H1 (cell line): ENCODE measurements at regions of chr7 and their contacts with region 1.

Region 1: DNA sequence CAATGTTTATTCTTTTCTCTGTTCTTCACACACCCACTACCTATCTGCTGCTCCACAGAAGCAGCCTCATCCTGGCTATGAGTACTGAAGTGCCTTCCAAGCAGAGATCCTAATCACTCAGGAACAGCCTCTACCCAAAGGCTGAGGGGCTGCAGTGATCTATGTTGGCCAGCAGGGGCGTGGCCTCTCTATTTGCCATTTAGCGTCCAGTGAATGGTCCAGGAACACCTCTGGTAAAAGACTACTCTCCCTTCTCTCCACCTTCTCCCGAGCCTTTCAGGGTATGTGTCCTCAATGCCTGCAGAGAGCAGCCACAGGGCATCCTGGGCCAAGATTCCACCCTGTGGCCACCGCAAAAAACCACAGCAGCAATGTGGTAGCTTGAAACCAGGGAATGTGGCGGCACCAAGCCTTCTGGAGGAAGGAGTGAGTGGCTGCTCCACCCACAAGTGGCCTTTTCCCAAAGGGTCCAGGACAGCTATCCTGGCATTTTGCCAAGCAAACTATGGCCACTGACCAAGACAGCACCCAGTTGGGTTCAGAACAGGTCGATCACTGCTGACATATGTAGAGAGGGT is 70.9 kb downstream of the SYPL1 start:
- DNase-seq: peak in 1 of 2 experiments; percentile 80
- H3K4me3 ChIP-seq: no peak overlapping the region
- H3K27ac ChIP-seq: no peak overlapping the region
- H3K4me1 ChIP-seq: peaks cover 0 to 7% (median 0%) of the 10 kb centered on the region in 4 experiments; a peak in 3 of 7 replicates
- H3K27me3 ChIP-seq: no peaks in the 10 kb centered on the region
- CTCF ChIP-seq: peak; percentile 76 to 98 (median 89)
- EP300 ChIP-seq: no peak
- POLR2A ChIP-seq: no peak
- RAD21 ChIP-seq: peak; percentile 55 to 65

Region 2: GRCh38 chr7:105652359-105652993 is 388.8 kb before region 1 on chr7:
- CTCF ChIA-PET with region 1: interaction called, 20 read pairs
- POLR2A ChIA-PET with region 1: no interaction called
- DNase-seq: peak; percentile 69 to 92
- H3K4me3 ChIP-seq: no peak overlapping the region
- H3K27ac ChIP-seq: no peak overlapping the region; the same call in 1 of the 2 replicates
- H3K4me1 ChIP-seq: peaks cover 33 to 58% (median 36%) of the 10 kb centered on the region in 4 experiments
- H3K27me3 ChIP-seq: no peaks in the 10 kb centered on the region; a peak in 1 of 7 replicates
- CTCF ChIP-seq: peak; percentile 90 to 97 (median 96)
- EP300 ChIP-seq: no peak
- POLR2A ChIP-seq: no peak
- RAD21 ChIP-seq: peak; percentile 90 to 92

Region 3: GRCh38 chr7:105861224-105861623 is 180.0 kb before region 1 on chr7:
- CTCF ChIA-PET with region 1: interaction called, 11 read pairs
- POLR2A ChIA-PET with region 1: no interaction called
- DNase-seq: no peak
- H3K4me3 ChIP-seq: peak overlapping the region in 1 of 4 experiments; percentile 9; a peak in 2 of 8 replicates
- H3K27ac ChIP-seq: no peak overlapping the region
- H3K4me1 ChIP-seq: peaks cover 6 to 17% (median 10%) of the 10 kb centered on the region in 4 experiments; a peak in 5 of 7 replicates
- H3K27me3 ChIP-seq: no peaks in the 10 kb centered on the region
- CTCF ChIP-seq: no peak
- EP300 ChIP-seq: no peak
- POLR2A ChIP-seq: no peak
- RAD21 ChIP-seq: no peak

Region 4: GRCh38 chr7:105924945-105925344 is 116.3 kb before region 1 on chr7:
- CTCF ChIA-PET with region 1: interaction called, 14 read pairs
- POLR2A ChIA-PET with region 1: no interaction called
- DNase-seq: no peak
- H3K4me3 ChIP-seq: no peak overlapping the region
- H3K27ac ChIP-seq: no peak overlapping the region
- H3K4me1 ChIP-seq: no peaks in the 10 kb centered on the region
- H3K27me3 ChIP-seq: no peaks in the 10 kb centered on the region
- CTCF ChIP-seq: no peak
- EP300 ChIP-seq: no peak
- POLR2A ChIP-seq: no peak
- RAD21 ChIP-seq: no peak

Region 5: GRCh38 chr7:105990726-105991453 is 50.3 kb before region 1 on chr7:
- CTCF ChIA-PET with region 1: interaction called, 18 read pairs
- POLR2A ChIA-PET with region 1: interaction called, 3 read pairs
- DNase-seq: peak; percentile 68 to 72
- H3K4me3 ChIP-seq: no peak overlapping the region
- H3K27ac ChIP-seq: no peak overlapping the region; the same call in 1 of the 2 replicates
- H3K4me1 ChIP-seq: peaks cover 11 to 34% (median 28%) of the 10 kb centered on the region in 4 experiments; a peak in 6 of 7 replicates
- H3K27me3 ChIP-seq: no peaks in the 10 kb centered on the region
- CTCF ChIP-seq: peak; percentile 37 to 76 (median 73)
- EP300 ChIP-seq: 0 out of 3 replicates have a peak, but pooled peaks of 1 of the 2 experiments have one; percentile 16
- POLR2A ChIP-seq: no peak
- RAD21 ChIP-seq: peak; percentile 40 to 49

Region 6: GRCh38 chr7:106056513-106057203 is 15.4 kb after region 1 on chr7:
- CTCF ChIA-PET with region 1: interaction called, 58 read pairs
- POLR2A ChIA-PET with region 1: interaction called, 3 read pairs
- DNase-seq: peak in 1 of 2 experiments; percentile 71
- H3K4me3 ChIP-seq: no peak overlapping the region
- H3K27ac ChIP-seq: no peak overlapping the region
- H3K4me1 ChIP-seq: peaks cover 0 to 5% (median 2%) of the 10 kb centered on the region in 4 experiments; a peak in 3 of 7 replicates
- H3K27me3 ChIP-seq: no peaks in the 10 kb centered on the region
- CTCF ChIP-seq: peak; percentile 83 to 95 (median 91)
- EP300 ChIP-seq: no peak
- POLR2A ChIP-seq: no peak
- RAD21 ChIP-seq: peak; percentile 88 to 92

Region 7: DNA sequence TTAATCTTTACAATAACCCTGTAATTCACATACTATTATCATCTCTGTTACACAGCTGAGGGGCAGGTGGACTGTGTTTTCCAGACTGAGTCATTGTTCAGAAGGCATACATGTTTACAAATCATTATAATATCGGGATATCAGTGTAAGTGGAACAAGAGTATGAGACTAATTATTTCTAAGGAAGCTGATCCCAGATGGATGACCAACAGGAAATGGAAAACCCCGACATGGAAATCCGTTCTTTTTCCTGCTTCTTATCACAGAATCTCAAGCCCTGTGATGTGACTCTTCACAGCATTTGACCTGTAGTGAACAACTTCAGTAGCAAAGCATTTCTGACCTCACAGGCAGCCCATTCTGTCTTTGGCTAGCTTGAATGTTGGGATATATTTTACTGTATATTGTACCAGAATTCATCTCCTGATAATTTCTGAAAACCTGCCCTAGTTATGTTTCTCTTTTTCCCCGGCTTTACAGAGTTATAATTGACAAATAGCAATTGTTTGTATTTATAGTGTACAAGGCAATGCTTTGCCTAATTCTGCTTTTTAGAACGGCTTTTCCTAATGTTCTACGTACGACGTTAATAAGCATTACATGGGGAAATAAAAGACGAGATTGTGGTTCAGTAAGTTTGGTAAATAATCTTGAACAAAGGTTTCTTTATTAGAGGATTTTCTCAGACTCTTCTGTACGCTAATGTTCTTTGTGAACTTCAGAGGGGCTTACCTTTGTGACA is 149.5 kb after region 1 on chr7:
- CTCF ChIA-PET with region 1: no interaction called
- POLR2A ChIA-PET with region 1: no interaction called
- DNase-seq: no peak
- H3K4me3 ChIP-seq: no peak overlapping the region
- H3K27ac ChIP-seq: no peak overlapping the region
- H3K4me1 ChIP-seq: no peaks in the 10 kb centered on the region
- H3K27me3 ChIP-seq: no peaks in the 10 kb centered on the region
- CTCF ChIP-seq: no peak
- EP300 ChIP-seq: no peak
- POLR2A ChIP-seq: no peak
- RAD21 ChIP-seq: no peak

Region 8: DNA sequence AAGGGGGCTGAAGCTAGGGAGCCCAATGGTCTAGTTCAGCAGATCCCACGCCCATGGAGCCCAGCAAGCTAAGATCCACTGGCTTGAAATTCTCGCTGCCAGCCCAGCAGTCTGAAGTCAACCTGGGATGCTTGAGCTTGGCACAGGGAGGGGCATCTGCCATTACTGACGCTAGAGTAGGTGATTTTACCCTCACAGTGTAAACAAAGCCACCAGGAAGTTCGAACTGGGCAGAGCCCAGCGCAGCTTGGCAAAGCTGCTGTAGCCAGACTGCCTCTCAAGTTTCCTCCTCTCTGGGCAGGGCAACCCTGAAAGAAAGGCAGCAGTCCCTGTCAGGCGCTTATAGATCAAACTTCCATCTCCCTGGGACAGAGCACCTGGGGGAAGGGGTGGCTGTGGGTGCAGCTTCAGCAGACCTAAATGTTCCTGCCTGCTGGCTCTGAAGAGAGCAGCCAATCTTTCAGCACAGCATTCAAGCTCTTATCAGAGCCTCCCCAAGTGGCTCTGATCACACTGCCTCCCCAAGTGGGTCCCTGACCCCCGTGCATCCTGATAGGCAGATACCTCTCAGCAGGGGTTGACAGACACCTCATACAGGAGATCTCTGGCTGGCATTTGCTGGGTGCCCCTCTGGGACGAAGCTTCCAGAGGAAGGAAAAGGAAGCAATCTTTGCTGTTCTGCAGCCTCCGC is 452.0 kb after region 1 on chr7:
- CTCF ChIA-PET with region 1: no interaction called
- POLR2A ChIA-PET with region 1: no interaction called
- DNase-seq: no peak
- H3K4me3 ChIP-seq: no peak overlapping the region
- H3K27ac ChIP-seq: no peak overlapping the region
- H3K4me1 ChIP-seq: no peaks in the 10 kb centered on the region
- H3K27me3 ChIP-seq: no peaks in the 10 kb centered on the region
- CTCF ChIP-seq: no peak
- EP300 ChIP-seq: no peak
- POLR2A ChIP-seq: no peak
- RAD21 ChIP-seq: no peak